Brain microvascular endothelial cell (primary cell): ENCODE measurements at regions of chr5 and their contacts with region 1.

Region 1: DNA sequence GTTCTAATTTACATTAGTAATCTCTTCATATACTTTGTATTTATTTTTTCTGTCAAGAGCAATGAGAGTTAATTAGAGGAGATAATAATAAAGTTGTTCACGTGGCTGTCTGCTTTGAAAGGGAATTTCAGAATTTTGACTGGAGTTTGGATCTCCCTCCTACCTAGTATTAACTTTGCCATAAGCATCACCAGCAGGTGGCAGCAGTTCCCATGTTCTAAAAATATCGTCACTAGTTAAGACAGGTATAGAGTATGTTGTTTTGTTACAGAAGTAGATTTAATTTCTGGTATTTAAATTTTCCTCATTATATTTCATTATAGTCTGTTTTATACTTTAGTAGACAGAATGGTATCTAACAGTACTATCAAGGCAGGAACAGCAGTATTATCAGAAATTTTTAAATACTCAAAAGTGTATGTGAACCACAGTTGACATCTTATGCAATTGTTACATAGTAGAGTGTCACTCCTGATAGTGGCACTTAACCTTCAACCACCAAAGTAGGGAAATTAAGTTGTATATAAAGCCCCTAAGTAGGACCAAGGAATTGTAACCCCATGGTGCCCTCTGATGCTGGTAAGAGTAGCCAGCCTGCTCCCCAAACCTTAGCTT is 20.4 kb downstream of the GNPDA1 start:
- DNase-seq: peak; percentile 54
- H3K4me3 ChIP-seq: no peak overlapping the region
- H3K27ac ChIP-seq: no peak overlapping the region
- H3K27me3 ChIP-seq: no peaks in the 10 kb centered on the region
- CTCF ChIP-seq: peak; percentile 74

Region 2: GRCh38 chr5:141825791-141826560 is 166.5 kb before region 1 on chr5:
- in situ Hi-C with region 1: no loop called
- DNase-seq: no peak
- H3K4me3 ChIP-seq: no peak overlapping the region
- H3K27ac ChIP-seq: no peak overlapping the region
- H3K27me3 ChIP-seq: no peaks in the 10 kb centered on the region
- CTCF ChIP-seq: peak; percentile 45

Region 3: DNA sequence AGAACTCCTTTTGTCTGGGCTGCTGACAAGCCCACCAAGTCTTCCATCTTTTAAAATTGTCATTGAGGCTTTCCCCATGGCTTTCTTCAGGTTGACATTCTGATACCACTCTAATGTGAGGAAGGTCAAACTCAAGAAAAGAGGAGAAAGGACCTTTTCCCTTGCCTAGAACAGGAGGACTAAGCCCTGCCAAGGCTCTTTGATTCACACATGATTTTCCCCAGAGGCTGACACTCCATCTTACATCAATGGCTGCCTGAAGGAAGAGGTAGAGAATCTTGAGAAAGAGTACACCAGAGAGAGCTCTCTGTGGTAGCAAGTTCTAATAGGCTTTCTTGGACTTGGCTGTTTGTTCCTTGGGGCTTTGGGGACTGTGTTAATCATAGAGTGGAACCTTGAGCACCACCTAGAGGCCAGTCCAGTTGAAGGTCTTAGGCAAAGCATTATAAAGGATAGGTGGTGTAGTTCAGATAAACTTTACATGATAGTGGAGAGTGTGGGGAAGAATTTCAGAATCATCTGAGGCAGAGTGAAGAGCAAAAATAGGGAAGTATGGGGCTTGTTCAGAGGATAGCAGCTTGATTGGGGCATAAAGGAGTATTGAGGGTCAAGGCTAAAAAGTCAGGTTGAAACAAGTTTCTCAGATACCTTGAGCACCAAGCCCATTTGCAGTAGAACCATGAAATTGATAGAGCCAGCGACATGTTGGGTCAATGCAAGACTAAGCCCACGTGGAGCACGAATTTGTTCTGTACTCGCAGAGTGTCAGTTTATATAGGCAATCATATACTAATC is 152.8 kb after region 1 on chr5:
- in situ Hi-C with region 1: loop called (anchors 25 kb)
- DNase-seq: peak; percentile 74
- H3K4me3 ChIP-seq: no peak overlapping the region
- H3K27ac ChIP-seq: no peak overlapping the region
- H3K27me3 ChIP-seq: no peaks in the 10 kb centered on the region
- CTCF ChIP-seq: peak; percentile 87

Region 4: GRCh38 chr5:142408981-142409481 is 416.6 kb after region 1 on chr5:
- in situ Hi-C with region 1: no loop called
- DNase-seq: no peak
- H3K4me3 ChIP-seq: no peak overlapping the region
- H3K27ac ChIP-seq: no peak overlapping the region
- H3K27me3 ChIP-seq: no peaks in the 10 kb centered on the region
- CTCF ChIP-seq: no peak